Colonic mucosa (tissue), 4 donors: ENCODE measurements at regions of chr2 and their contacts with region 1.

Region 1: DNA sequence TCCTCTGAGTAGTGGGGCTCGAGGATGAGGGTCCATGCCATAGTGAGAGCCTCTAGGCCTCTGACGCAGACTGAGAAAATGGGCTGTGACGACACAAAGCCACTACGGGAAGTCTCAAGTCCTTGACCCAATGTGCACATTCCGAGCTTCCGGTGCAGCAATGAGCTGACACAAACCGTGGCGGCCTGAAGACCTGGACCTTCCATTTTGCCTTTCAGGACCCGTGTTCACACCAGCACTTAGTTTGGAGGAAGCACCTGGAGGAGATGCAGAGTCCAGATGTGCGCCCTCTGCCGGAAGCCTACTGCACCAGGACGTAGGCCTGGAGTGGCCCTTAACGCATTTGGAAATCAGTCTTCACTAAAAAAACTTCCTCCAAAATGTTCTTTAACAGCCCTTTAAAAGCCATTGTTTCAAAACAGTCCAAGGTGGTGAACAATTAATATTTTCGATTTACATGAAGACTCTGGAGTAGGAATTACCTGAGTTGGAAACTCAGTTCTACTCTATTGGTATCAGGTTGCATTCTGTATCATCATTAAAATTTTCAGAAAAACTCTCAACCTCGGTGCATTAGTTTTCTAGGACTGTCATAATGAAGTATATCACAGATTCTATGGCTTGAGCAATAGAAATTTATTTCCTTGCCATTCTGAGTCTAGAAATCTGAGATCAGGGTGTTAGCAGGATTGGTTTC is 33.9 kb downstream of the BMP10 start:
- DNase-seq: peak; percentile 68
- H3K4me3 ChIP-seq: no peak overlapping the region
- H3K27ac ChIP-seq: no peak overlapping the region
- H3K4me1 ChIP-seq: no peaks in the 10 kb centered on the region
- H3K27me3 ChIP-seq: no peaks in the 10 kb centered on the region
- CTCF ChIP-seq: peak; percentile 61

Region 2: GRCh38 chr2:68726608-68727367 is 110.5 kb before region 1 on chr2:
- intact Hi-C with region 1: no loop called
- DNase-seq: no peak
- H3K4me3 ChIP-seq: no peak overlapping the region
- H3K27ac ChIP-seq: no peak overlapping the region
- H3K4me1 ChIP-seq: peaks cover 3% of the 10 kb centered on the region
- H3K27me3 ChIP-seq: no peaks in the 10 kb centered on the region
- CTCF ChIP-seq: no peak

Region 3: GRCh38 chr2:68751397-68752339 is 85.6 kb before region 1 on chr2:
- intact Hi-C with region 1: loop called (anchors 2 kb)
- DNase-seq: peak; percentile 96
- H3K4me3 ChIP-seq: no peak overlapping the region
- H3K27ac ChIP-seq: no peak overlapping the region
- H3K4me1 ChIP-seq: no peaks in the 10 kb centered on the region
- H3K27me3 ChIP-seq: no peaks in the 10 kb centered on the region
- CTCF ChIP-seq: peak; percentile 98